ENCODE measurements at regions of chr14 and their contacts with region 1.

Region 1: DNA sequence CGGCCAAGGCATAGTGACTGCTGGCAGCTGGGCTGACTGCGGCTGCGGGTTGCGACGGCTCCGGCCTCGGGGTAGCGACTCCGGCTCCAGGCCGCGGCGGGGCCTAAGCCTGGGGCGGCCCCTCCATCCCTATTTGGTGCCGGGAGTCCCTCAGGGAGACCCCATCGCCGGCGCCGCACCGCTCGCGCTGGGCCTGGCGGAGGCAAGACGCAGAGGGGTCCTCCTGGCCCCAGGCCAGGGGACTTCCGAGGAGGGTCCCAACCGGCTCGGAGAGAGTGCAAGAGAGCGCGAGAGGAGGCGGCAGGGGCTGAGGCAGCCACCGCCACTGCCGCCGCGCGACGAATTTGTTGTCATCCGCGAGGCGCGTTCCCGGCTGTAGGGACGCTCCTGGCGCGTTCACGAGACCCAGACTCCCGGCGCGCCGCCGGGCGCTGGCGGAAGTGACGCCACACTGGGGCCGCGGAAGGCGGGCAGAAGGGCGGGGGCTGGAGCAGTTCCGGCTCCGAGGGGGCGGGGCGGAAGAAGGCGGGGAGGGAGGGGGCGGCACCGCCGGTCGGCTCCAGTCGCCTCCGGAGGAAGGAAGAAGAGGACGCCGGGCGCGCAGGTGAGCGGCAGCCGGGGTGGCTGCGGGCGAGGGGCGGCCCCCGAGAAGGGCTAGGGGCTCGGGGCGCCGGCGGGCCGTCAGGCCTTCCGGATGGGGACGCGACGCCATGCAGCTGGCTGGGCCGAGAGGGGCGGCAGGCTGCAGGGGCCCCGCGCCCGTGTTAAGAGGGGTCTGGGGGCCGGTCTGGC is at the starts of genes ATG2B and GSKIP:
- DNase-seq: peak in 1 of 2 donors; percentile 91
- H3K4me3 ChIP-seq: peak within 1 kb of the TSS; percentile 98 to 99
- H3K27ac ChIP-seq: peak within 1 kb of the TSS; percentile 97
- H3K4me1 ChIP-seq: peaks cover 45% of the 10 kb centered on the region
- H3K27me3 ChIP-seq: no peaks in the 10 kb centered on the region
- CTCF ChIP-seq: no peak
- POLR2A ChIP-seq: peak in 1 of 2 donors; percentile 25
- total RNA-seq, gene ATG2B: 32.2 TPM
- total RNA-seq, gene GSKIP: 8.1 TPM

Region 2: GRCh38 chr14:96391293-96392118 is 28.3 kb after region 1 on chr14:
- intact Hi-C with region 1: loop called (anchors 2 kb)
- DNase-seq: peak; percentile 92 to 98
- H3K4me3 ChIP-seq: peak overlapping the region; percentile 72 to 89
- H3K27ac ChIP-seq: peak overlapping the region; percentile 91
- H3K4me1 ChIP-seq: peaks cover 9% of the 10 kb centered on the region
- H3K27me3 ChIP-seq: no peaks in the 10 kb centered on the region
- CTCF ChIP-seq: no peak
- POLR2A ChIP-seq: peak in 1 of 2 donors; percentile 14